AG04450 (cell line): ENCODE measurements at regions of chr4 and their contacts with region 1.

Region 1: DNA sequence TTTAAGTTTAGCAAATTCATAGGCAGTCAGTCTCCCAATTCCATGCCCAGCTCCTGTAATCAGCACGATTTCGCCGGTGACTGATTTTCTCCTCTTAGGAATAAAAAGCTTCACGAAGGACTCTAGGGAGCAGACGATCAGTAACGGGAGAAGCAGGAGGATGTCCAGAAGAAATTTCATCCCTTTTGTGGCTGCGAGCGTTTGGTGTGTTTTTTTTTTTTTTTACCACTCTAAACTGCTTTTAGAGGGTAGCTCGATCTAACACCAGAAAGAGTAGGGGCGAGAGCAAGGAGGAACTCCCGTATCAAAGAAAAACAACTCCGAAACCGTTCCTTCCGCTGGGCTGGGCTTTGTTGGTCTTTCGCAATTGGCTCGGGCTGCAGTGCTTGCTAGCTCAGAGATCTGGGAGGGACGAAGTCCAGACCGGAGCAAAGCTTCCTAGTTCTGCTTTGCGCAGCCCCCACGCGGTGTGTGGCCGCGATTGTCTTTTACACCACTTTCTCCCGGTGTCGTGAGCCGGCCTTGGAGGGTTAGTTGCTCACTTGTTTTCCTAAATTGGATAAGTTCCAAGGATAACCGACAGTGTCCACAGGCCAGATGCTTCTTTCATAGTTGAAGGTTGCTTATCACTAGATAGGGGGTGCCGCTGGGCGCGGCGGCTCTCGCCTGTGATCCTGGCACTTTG is at the start of gene HSD17B11:
- DNase-seq: peak; percentile 87
- H3K4me3 ChIP-seq: peak within 1 kb of the TSS; percentile 79
- H3K27ac ChIP-seq: peak within 1 kb of the TSS; percentile 79
- H3K27me3 ChIP-seq: no peaks in the 10 kb centered on the region
- CTCF ChIP-seq: no peak; the same call in none of the 2 replicates
- polyA plus RNA-seq, gene HSD17B11: 32.4 and 49.7 TPM in 2 replicates

Region 2: GRCh38 chr4:87375719-87376291 is 15.2 kb before region 1 on chr4:
- CTCF ChIA-PET with region 1: interaction called, 48 read pairs
- POLR2A ChIA-PET with region 1: no interaction called
- DNase-seq: peak; percentile 76
- H3K4me3 ChIP-seq: no peak overlapping the region
- H3K27ac ChIP-seq: peak overlapping the region; percentile 3
- H3K27me3 ChIP-seq: no peaks in the 10 kb centered on the region
- CTCF ChIP-seq: peak; percentile 82

Region 3: DNA sequence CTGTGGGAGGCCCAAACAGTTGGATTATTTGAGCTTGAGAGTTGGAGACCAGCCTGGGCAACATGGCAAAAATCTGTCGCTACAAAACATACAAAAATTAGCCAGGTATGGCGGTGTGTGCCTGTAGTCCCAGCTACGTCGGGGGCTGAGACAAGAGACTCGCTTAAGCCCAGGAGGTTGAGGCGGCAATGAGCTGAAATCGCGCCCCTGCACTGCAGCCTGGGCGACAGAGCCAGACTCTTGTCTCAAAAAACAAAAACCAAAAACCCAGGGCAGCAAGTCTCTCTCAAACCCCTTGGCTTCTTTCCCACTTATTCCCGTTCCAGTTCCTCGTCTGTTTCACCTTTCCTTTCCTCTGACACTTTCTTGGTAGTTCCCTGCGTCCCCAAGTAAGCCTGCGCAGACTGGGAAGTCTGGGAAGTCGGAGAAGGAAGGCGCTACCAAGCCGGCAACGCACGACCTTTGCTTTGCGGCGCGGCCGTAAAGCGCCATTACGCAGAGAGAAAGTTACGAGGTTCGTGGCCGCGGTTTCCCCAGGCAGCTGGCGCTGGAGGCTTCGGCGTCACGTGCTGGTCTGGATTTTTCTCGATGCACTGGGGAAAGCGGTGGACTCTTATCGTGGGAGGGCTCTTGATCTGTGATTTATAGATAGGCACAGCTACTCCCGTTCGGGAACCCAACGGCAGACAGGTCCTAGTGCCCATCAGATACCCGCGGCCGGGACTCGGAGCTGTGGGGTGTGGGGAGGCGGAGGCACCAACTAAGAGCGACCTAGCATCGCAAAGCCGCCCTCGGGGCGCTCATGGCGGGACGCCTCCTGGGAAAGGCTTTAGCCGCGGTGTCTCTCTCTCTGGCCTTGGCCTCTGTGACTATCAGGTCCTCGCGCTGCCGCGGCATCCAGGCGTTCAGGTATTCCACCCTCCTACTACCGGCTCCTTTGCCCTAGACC is 31.3 kb after region 1 on chr4 and contains the start of gene NUDT9:
- CTCF ChIA-PET with region 1: interaction called, 4 read pairs
- POLR2A ChIA-PET with region 1: interaction called, 27 read pairs
- DNase-seq: peak; percentile 88
- H3K4me3 ChIP-seq: peak within 1 kb of the TSS; percentile 98
- H3K27ac ChIP-seq: peak within 1 kb of the TSS; percentile 96
- H3K27me3 ChIP-seq: no peaks in the 10 kb centered on the region
- CTCF ChIP-seq: no peak
- polyA plus RNA-seq, gene NUDT9: 22.9 and 31.4 TPM in 2 replicates